Activated CD8-positive, alpha-beta memory T cell treated with anti-CD3 and anti-CD28 coated beads, Interleukin-2, amount 10 ng/mL, durations not matched to agents 7 days and 5 days (primary cell): ENCODE measurements at regions of chr6 and their contacts with region 1.

Region 1: DNA sequence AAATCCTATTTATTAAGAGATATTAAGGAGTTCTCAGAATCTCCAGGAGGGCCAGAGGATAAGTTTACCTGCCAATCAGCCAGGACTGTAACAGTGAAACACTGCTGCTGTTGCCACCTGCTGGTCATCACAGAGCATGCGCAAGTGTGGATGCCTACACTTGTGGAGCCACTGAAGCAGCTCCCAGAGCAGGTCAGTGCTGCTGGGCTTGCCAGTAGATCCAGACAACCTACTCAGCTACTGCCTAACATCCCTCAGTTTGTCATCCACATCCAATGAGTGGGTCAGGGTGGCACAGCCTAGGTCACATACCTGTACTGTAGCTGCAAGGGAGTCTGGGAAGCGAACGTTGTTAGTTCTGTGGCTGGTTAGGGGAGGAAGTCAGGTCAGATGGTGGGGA is 18.3 kb upstream of the NHSL1 start:
- DNase-seq: peak; percentile 73
- ATAC-seq: peak; percentile 83
- H3K4me3 Mint-ChIP-seq: no peak overlapping the region
- H3K27ac Mint-ChIP-seq: no peak overlapping the region
- H3K4me1 Mint-ChIP-seq: peaks cover 31% of the 10 kb centered on the region
- H3K27me3 Mint-ChIP-seq: peaks cover 21% of the 10 kb centered on the region

Region 2: GRCh38 chr6:138403801-138404661 is 113.6 kb before region 1 on chr6 and contains the start of gene HEBP2:
- CTCF ChIA-PET with region 1: interaction called, 18 read pairs
- DNase-seq: peak; percentile 96
- ATAC-seq: peak; percentile 94
- H3K4me3 Mint-ChIP-seq: peak within 1 kb of the TSS; percentile 81
- H3K27ac Mint-ChIP-seq: peak within 1 kb of the TSS; percentile 80
- H3K4me1 Mint-ChIP-seq: peaks cover 20% of the 10 kb centered on the region
- H3K27me3 Mint-ChIP-seq: peaks cover 4% of the 10 kb centered on the region
- total RNA-seq, gene HEBP2: 37.2 to 43.1 TPM

Region 3: GRCh38 chr6:138428944-138429598 is 88.6 kb before region 1 on chr6:
- CTCF ChIA-PET with region 1: interaction called, 18 read pairs
- DNase-seq: no peak
- ATAC-seq: peak; percentile 53
- H3K4me3 Mint-ChIP-seq: no peak overlapping the region
- H3K27ac Mint-ChIP-seq: no peak overlapping the region
- H3K4me1 Mint-ChIP-seq: no peaks in the 10 kb centered on the region
- H3K27me3 Mint-ChIP-seq: peaks cover 2% of the 10 kb centered on the region